ENCODE measurements at regions of chr11 and their contacts with region 1.

Region 1: GRCh38 chr11:22787551-22788162 is 41.9 kb downstream of the SVIP start:
- DNase-seq: peak in 4 of 9 experiments; percentile 13 to 56 (median 36)
- ATAC-seq: no peak
- H3K4me3 ChIP-seq: no peak overlapping the region
- H3K4me3 Mint-ChIP-seq: no peak overlapping the region
- H3K27ac ChIP-seq: no peak overlapping the region
- H3K27ac Mint-ChIP-seq: no peak overlapping the region
- H3K4me1 ChIP-seq: no peaks in the 10 kb centered on the region
- H3K4me1 Mint-ChIP-seq: no peaks in the 10 kb centered on the region
- H3K27me3 ChIP-seq: no peaks in the 10 kb centered on the region
- H3K27me3 Mint-ChIP-seq: peaks cover 5% of the 10 kb centered on the region
- CTCF ChIP-seq: peak; percentile 86

Region 2: GRCh38 chr11:22244986-22245592 is 542.6 kb before region 1 on chr11:
- CTCF ChIA-PET with region 1: interaction called, 9 read pairs
- POLR2A ChIA-PET with region 1: no interaction called
- intact Hi-C with region 1: loop called (anchors 1 to 2 kb)
- DNase-seq: peak in 5 of 9 experiments; percentile 5 to 25 (median 10)
- ATAC-seq: peak; percentile 48
- H3K4me3 ChIP-seq: no peak overlapping the region
- H3K4me3 Mint-ChIP-seq: no peak overlapping the region
- H3K27ac ChIP-seq: no peak overlapping the region
- H3K27ac Mint-ChIP-seq: no peak overlapping the region
- H3K4me1 ChIP-seq: no peaks in the 10 kb centered on the region
- H3K4me1 Mint-ChIP-seq: no peaks in the 10 kb centered on the region
- H3K27me3 ChIP-seq: no peaks in the 10 kb centered on the region
- H3K27me3 Mint-ChIP-seq: peaks cover 16% of the 10 kb centered on the region
- CTCF ChIP-seq: peak; percentile 61

Region 3: DNA sequence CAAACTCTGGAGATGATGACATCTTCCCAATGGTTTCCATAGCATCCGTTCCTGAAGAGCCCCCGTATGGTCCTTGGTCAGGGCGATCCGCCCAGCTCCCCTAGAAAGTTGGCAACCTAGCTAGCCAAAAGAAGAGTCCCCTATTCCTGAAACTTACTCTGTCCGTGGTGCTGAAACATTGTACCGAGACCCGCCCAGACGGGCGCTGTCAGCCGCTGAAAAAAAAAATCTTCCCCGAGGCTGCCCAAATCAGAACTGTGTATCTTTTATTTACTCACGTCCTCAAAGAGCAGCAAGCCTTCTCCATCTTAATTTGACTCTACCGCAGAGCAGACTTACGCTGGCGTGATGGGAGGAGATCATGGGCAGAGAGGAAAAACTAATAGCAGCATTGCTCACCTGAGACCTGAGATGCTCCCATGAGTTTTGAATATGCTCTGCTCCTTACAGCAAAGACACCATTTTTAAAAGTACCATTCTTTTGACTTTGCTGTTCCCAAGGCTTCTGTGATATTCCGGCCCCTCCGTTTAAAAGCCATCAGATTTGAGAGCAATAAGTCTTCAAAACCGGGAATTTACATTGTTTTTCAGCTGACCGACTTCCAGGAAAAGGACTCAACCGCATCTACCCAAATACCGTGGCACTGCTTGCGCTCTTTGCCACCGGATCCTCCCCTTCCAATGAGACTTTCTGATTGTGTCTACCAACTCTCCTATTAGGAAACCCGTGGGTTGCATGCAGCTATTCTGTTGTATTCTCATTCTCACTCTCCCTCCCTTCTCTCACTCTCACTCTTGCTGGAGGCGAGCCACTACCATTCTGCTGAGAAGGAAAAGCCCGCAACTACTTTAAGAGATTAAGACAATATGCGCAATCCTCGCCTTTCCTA is 449.8 kb before region 1 on chr11 and contains the start of gene SLC17A6:
- CTCF ChIA-PET with region 1: interaction called, 12 read pairs
- POLR2A ChIA-PET with region 1: no interaction called
- intact Hi-C with region 1: loop called (anchors 1 kb)
- DNase-seq: peak in 2 of 9 experiments; percentile 12 to 18
- ATAC-seq: no peak
- H3K4me3 ChIP-seq: no peak within 1 kb of the TSS
- H3K4me3 Mint-ChIP-seq: no peak within 1 kb of the TSS
- H3K27ac ChIP-seq: no peak within 1 kb of the TSS
- H3K27ac Mint-ChIP-seq: no peak within 1 kb of the TSS
- H3K4me1 ChIP-seq: no peaks in the 10 kb centered on the region
- H3K4me1 Mint-ChIP-seq: peaks cover 15% of the 10 kb centered on the region
- H3K27me3 ChIP-seq: peaks cover 16 to 32% of the 10 kb centered on the region in 2 experiments
- H3K27me3 Mint-ChIP-seq: peaks cover 66% of the 10 kb centered on the region
- CTCF ChIP-seq: no peak
- total RNA-seq, gene SLC17A6: not detected

Region 4: DNA sequence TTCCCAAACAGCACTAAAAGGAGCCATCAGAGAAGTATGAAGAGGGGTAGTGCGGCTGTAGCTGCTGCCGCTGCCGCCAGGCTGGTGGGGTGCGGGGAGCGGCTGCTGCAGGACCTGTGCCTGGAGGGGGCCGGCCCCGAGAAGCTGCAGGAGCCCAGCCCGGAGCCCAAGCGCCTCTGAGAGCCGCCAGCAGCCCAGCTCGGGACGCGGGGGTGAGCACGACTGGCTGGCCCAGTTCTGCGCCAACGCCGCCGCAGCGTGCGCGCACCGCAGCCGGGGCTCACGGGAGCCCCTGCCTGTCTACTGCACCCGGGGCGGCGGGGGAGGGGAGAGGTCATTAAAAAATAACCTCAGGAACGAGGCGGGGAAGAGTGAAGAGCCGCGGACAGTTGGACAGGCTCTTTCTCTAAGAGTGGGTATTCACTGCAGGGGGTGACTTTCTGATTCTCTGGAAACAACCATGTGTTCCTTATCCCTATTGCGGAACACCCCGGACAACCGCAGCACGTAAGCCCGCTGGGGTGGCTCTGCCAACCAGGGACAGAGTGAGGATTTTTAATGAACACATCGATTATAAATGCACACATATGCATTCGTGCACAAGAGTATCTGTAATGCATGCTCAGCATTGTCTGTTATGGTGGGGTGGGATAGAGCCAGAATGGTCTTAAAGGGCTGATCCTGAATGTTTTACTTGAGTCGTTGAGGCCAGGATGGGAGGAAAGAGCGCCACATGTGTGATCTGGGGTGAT is 120.8 kb before region 1 on chr11:
- CTCF ChIA-PET with region 1: interaction called, 11 read pairs
- POLR2A ChIA-PET with region 1: no interaction called
- intact Hi-C with region 1: loop called (anchors 2 kb)
- DNase-seq: peak in 5 of 9 experiments; percentile 16 to 50 (median 22)
- ATAC-seq: peak; percentile 42
- H3K4me3 ChIP-seq: peak overlapping the region; percentile 3 to 14
- H3K4me3 Mint-ChIP-seq: peak overlapping the region; percentile 53
- H3K27ac ChIP-seq: no peak overlapping the region
- H3K27ac Mint-ChIP-seq: no peak overlapping the region
- H3K4me1 ChIP-seq: peaks cover 4% of the 10 kb centered on the region
- H3K4me1 Mint-ChIP-seq: peaks cover 12% of the 10 kb centered on the region
- H3K27me3 ChIP-seq: peaks cover 6 to 18% of the 10 kb centered on the region in 2 experiments
- H3K27me3 Mint-ChIP-seq: peaks cover 53% of the 10 kb centered on the region
- CTCF ChIP-seq: no peak

Region 5: DNA sequence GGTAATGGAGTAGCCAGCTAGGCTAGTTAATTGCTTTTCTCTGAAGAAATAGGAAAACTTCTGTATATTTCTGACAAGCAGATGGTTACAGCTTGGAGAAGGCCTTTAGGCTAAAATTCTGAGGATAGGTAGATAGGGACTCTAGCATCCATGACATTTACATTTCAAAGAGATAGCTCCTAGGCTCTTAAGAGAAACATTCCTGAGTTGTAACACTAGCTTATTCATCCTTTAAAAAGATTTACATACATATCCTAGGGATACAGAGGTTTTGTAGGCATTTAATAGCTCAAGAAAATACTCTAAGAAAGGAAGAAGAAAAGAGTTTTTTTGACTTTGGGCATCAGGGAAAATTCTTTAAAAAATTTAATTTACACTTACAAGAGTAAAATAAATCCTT is 203.5 kb after region 1 on chr11:
- CTCF ChIA-PET with region 1: no interaction called
- POLR2A ChIA-PET with region 1: no interaction called
- intact Hi-C with region 1: no loop called
- DNase-seq: no peak
- ATAC-seq: no peak
- H3K4me3 ChIP-seq: no peak overlapping the region
- H3K4me3 Mint-ChIP-seq: no peak overlapping the region
- H3K27ac ChIP-seq: no peak overlapping the region
- H3K27ac Mint-ChIP-seq: no peak overlapping the region
- H3K4me1 ChIP-seq: no peaks in the 10 kb centered on the region
- H3K4me1 Mint-ChIP-seq: no peaks in the 10 kb centered on the region
- H3K27me3 ChIP-seq: no peaks in the 10 kb centered on the region
- H3K27me3 Mint-ChIP-seq: no peaks in the 10 kb centered on the region
- CTCF ChIP-seq: no peak

Measured in CD8-positive, alpha-beta T cell (primary cell).